Activated naive CD4-positive, alpha-beta T cell treated with anti-CD3 and anti-CD28 coated beads, Interleukin-2, amount 10 ng/mL, durations not matched to agents 7 days and 5 days (primary cell): ENCODE measurements at regions of chr17 and their contacts with region 1.

Region 1: DNA sequence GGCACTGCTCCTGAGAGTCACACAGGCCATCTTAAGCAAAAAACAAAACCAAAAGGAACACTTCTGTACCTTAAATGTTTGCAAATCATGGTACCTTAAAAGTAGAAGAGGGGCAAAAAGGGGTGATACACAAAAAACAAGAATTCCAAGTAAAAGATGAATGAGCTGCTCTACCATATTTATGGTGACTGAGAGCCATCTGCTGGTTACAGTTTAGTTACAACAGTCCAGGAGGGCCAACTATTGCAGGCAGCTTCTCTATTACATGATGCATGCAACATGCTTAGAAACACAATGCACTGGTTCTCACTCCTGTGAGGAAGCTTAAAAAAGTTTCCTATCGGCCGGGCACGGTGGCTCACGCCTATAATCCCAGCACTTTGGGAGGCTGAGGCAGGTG is 53.5 kb downstream of the STX8 start:
- DNase-seq: no peak
- H3K4me3 Mint-ChIP-seq: no peak overlapping the region
- H3K27ac Mint-ChIP-seq: no peak overlapping the region
- H3K4me1 Mint-ChIP-seq: peaks cover 14% of the 10 kb centered on the region
- H3K27me3 Mint-ChIP-seq: no peaks in the 10 kb centered on the region

Region 2: DNA sequence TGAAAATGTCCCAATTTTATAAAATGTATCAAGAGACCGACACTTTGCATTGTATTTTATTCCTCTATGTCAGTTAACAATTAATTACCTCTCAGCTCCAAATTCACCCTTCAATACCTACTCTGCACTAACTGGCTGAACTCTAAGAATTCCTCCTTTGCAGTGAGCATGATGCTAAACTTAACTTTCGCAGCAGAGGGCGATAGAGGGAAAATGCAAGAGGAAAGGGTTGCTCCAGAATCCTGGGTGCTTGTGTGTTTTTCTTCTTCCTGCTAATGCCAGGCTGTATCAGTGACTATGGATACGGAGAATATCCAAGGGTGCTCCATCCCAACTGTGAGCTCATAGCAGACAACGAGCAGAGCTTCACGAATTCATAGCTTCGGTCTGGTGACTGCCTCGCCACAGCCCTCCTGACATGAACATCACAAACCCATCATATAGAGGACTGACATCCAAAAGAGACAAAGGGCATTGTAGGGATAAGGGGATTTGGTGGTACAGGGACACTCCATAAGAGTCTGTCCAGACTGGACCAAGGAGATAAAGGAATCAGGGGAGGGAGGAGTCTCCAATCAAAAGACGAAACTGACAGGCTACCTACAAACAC is 119.4 kb before region 1 on chr17:
- CTCF ChIA-PET with region 1: interaction called, 15 read pairs
- DNase-seq: peak; percentile 62
- H3K4me3 Mint-ChIP-seq: no peak overlapping the region
- H3K27ac Mint-ChIP-seq: no peak overlapping the region
- H3K4me1 Mint-ChIP-seq: no peaks in the 10 kb centered on the region
- H3K27me3 Mint-ChIP-seq: no peaks in the 10 kb centered on the region

Region 3: DNA sequence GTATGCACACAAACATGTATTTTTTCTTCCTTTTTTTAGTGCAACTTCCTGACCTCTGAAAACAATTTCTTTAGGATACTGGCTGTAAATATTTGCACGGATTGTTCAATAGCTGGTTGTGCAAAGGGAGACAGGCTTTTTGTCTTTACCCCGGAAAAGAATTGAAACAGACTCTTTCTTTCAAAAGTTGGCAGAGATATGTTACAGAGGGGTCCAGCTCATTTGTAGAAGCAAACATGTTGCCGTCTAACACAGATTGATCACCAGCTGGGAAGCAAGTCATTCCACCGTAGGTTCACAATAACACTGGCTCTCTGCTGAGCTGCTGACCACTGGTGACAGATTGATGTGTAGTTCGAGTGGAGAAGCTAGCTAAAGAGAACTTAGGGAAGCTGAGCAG is 77.4 kb before region 1 on chr17:
- CTCF ChIA-PET with region 1: no interaction called
- DNase-seq: no peak
- H3K4me3 Mint-ChIP-seq: no peak overlapping the region
- H3K27ac Mint-ChIP-seq: no peak overlapping the region
- H3K4me1 Mint-ChIP-seq: no peaks in the 10 kb centered on the region
- H3K27me3 Mint-ChIP-seq: no peaks in the 10 kb centered on the region

Region 4: DNA sequence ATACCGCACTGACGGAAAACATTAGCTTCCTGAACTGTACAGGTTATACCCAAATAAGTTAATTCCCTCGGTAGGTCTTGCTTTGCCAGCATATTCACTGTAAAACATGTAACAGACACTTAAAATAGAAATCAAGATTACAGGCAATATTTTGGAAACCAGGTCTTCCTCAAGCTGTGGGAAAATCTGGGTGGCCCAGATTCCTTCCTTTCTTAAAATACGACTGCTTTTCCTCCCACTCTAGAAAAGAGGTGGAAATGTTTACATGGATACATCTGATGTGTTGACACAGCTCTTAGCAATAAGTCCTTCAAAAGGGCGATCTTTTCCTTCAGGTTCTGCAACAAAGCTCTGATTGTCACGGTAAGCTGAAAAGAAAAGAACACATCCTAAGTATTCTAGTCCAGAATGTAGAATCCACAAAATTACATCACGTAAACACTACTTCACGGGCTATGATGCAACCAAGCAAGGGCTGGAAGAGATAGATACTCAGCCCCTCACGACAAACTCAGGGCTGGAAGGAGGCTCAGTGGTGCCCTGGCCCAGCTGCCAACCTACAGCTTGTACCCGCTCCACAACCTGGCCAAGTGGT is 35.2 kb after region 1 on chr17:
- CTCF ChIA-PET with region 1: no interaction called
- DNase-seq: no peak
- H3K4me3 Mint-ChIP-seq: no peak overlapping the region
- H3K27ac Mint-ChIP-seq: no peak overlapping the region
- H3K4me1 Mint-ChIP-seq: no peaks in the 10 kb centered on the region
- H3K27me3 Mint-ChIP-seq: no peaks in the 10 kb centered on the region